ENCODE measurements at regions of chr3 and their contacts with region 1.

Region 1: DNA sequence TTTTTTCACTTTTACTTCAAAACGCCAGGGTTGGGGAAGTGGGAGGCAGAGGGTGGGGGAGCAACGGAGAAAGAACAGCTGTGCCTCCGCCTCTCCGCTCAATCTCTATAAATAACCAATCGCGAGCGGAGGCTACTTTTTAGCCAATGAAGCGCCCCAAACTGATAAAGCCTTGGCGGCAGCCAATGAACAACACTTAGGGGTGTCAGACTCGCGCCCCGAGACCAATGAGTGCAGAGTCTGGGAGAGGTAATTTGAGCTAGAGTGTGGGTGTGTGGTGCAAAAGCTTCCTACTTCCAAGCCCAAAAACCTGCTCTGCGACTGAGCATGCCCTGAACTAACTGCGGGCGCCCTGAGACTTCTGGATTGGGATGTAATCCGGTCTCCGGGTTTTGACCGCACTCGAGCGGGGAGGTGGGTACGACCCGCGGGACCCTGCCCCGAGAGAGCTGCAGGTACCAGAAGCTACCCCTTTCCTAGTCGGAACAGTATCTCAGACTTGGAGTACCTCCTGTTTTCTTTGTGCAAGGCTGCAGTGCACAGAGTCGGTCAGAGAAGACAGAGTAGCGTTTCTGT is 800 bp upstream of the RAP2B start:
- DNase-seq: peak; percentile 81 to 96
- ATAC-seq: peak; percentile 72 to 89 (median 78)
- H3K4me3 ChIP-seq: peak overlapping the region; percentile 91
- H3K4me3 Mint-ChIP-seq: peak overlapping the region; percentile 98
- H3K27ac ChIP-seq: peak overlapping the region; percentile 87
- H3K27ac Mint-ChIP-seq: peak overlapping the region; percentile 90 to 92
- H3K4me1 ChIP-seq: peaks cover 11% of the 10 kb centered on the region
- H3K4me1 Mint-ChIP-seq: peaks cover 50 to 54% of the 10 kb centered on the region in 2 donors
- H3K27me3 ChIP-seq: no peaks in the 10 kb centered on the region
- H3K27me3 Mint-ChIP-seq: no peaks in the 10 kb centered on the region
- CTCF ChIP-seq: no peak

Region 2: DNA sequence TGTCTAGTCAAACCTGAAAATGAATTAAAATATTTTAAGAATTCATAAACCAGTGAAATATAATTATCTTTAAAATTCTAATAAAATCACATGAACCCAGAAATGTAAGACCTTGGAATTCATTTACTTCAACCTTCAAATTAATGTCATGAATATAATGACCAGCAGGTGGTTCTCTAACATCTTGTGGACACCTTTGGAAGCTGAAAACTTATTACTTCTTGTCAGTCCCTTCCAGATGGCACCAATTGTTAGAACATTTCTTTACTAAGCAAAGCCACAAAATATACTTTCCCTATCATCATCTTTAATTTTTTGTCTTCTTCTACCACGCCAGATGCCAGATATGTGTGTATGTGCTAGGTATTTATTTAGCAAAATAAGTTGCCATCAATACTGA is 652.5 kb before region 1 on chr3:
- intact Hi-C with region 1: no loop called
- DNase-seq: no peak
- ATAC-seq: no peak
- H3K4me3 ChIP-seq: no peak overlapping the region
- H3K4me3 Mint-ChIP-seq: no peak overlapping the region
- H3K27ac ChIP-seq: no peak overlapping the region
- H3K27ac Mint-ChIP-seq: no peak overlapping the region
- H3K4me1 ChIP-seq: no peaks in the 10 kb centered on the region
- H3K4me1 Mint-ChIP-seq: no peaks in the 10 kb centered on the region
- H3K27me3 ChIP-seq: no peaks in the 10 kb centered on the region
- H3K27me3 Mint-ChIP-seq: peaks cover 0 to 9% of the 10 kb centered on the region in 2 donors
- CTCF ChIP-seq: no peak

Region 3: GRCh38 chr3:153043729-153044328 is 117.4 kb before region 1 on chr3:
- intact Hi-C with region 1: loop called (anchors 5 kb)
- DNase-seq: no peak
- ATAC-seq: no peak
- H3K4me3 ChIP-seq: no peak overlapping the region
- H3K4me3 Mint-ChIP-seq: no peak overlapping the region
- H3K27ac ChIP-seq: no peak overlapping the region
- H3K27ac Mint-ChIP-seq: no peak overlapping the region
- H3K4me1 ChIP-seq: peaks cover 2% of the 10 kb centered on the region
- H3K4me1 Mint-ChIP-seq: no peaks in the 10 kb centered on the region
- H3K27me3 ChIP-seq: no peaks in the 10 kb centered on the region
- H3K27me3 Mint-ChIP-seq: peaks cover 3 to 16% of the 10 kb centered on the region in 2 donors
- CTCF ChIP-seq: no peak

Region 4: DNA sequence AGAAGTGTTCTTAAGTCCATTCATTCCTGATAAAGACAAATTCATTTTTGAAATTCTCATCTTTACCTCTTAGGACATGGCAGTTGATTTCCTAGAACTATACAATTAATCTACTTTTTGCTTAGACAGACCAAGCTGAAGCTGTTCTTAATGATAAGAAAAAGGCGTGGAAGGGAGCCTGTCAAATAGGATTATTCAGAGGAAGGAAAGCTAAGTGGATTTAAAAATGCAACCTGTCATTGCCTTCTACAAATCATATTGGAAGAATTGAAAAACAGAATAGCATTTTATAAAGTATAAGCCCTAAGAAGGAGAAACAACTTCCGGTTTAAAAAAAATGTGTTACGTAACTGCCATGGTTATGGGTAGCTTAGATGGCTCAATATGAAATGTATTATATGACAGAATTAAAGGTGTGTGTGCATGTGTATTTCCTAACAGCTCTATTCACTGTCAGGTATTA is 80.4 kb before region 1 on chr3:
- intact Hi-C with region 1: no loop called
- DNase-seq: no peak
- ATAC-seq: no peak
- H3K4me3 ChIP-seq: no peak overlapping the region
- H3K4me3 Mint-ChIP-seq: no peak overlapping the region
- H3K27ac ChIP-seq: no peak overlapping the region
- H3K27ac Mint-ChIP-seq: no peak overlapping the region
- H3K4me1 ChIP-seq: no peaks in the 10 kb centered on the region
- H3K4me1 Mint-ChIP-seq: peaks cover 6 to 8% of the 10 kb centered on the region in 2 donors
- H3K27me3 ChIP-seq: no peaks in the 10 kb centered on the region
- H3K27me3 Mint-ChIP-seq: no peaks in the 10 kb centered on the region
- CTCF ChIP-seq: no peak

Region 5: DNA sequence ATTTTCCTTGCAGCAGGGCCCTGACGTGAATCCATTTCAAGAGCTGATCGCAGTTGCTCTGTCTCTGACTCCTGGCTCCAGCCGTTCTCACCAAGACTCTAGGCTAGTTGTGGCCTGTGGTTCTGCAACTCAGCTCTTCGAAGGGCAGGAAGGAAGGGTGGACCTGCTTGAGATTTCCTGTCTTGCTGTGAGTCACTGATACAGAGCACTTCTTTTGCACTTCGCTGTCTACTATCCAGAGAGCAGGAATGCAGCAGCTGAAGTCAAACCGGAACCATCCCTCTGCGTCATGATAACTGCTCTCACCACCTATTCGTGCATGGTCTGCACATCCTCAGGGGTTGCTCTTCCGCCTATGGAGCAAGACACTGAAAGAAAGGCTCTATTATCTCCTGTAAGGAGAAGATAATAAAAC is 60.5 kb after region 1 on chr3:
- intact Hi-C with region 1: loop called (anchors 1 kb)
- DNase-seq: peak; percentile 72 to 93
- ATAC-seq: peak; percentile 90 to 98 (median 98)
- H3K4me3 ChIP-seq: peak overlapping the region; percentile 2
- H3K4me3 Mint-ChIP-seq: peak overlapping the region; percentile 86
- H3K27ac ChIP-seq: peak overlapping the region; percentile 99
- H3K27ac Mint-ChIP-seq: peak overlapping the region; percentile 94 to 99
- H3K4me1 ChIP-seq: peaks cover 45% of the 10 kb centered on the region
- H3K4me1 Mint-ChIP-seq: peaks cover 49 to 60% of the 10 kb centered on the region in 2 donors
- H3K27me3 ChIP-seq: no peaks in the 10 kb centered on the region
- H3K27me3 Mint-ChIP-seq: no peaks in the 10 kb centered on the region
- CTCF ChIP-seq: no peak

Region 6: DNA sequence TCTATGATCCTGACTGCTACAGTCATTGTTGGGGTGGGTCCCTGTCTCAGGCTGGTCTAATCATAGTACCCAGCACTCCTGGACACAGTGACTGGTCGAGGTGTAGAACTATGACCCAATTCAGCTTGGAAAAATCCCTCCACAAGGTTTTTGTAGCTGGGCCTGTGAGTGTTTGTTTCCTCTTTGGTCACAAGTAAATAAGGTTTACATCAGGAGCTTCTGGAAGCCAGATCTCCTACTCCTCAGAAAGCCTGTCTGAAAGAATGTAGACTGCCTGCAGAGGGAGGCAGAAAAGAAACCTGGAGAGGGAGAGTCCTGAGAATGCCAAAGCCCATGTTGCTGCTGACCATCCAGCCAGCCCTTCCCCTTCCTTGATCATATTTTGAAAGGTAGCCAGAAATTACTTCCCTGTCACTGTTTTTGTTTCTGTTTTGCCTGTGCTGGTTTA is 124.0 kb after region 1 on chr3:
- intact Hi-C with region 1: loop called (anchors 5 kb)
- DNase-seq: peak in 1 of 2 donors; percentile 6
- ATAC-seq: no peak
- H3K4me3 ChIP-seq: no peak overlapping the region
- H3K4me3 Mint-ChIP-seq: no peak overlapping the region
- H3K27ac ChIP-seq: peak overlapping the region; percentile 0
- H3K27ac Mint-ChIP-seq: peak overlapping the region; percentile 72 to 74
- H3K4me1 ChIP-seq: peaks cover 15% of the 10 kb centered on the region
- H3K4me1 Mint-ChIP-seq: peaks cover 41 to 46% of the 10 kb centered on the region in 2 donors
- H3K27me3 ChIP-seq: no peaks in the 10 kb centered on the region
- H3K27me3 Mint-ChIP-seq: no peaks in the 10 kb centered on the region
- CTCF ChIP-seq: no peak

Region 7: DNA sequence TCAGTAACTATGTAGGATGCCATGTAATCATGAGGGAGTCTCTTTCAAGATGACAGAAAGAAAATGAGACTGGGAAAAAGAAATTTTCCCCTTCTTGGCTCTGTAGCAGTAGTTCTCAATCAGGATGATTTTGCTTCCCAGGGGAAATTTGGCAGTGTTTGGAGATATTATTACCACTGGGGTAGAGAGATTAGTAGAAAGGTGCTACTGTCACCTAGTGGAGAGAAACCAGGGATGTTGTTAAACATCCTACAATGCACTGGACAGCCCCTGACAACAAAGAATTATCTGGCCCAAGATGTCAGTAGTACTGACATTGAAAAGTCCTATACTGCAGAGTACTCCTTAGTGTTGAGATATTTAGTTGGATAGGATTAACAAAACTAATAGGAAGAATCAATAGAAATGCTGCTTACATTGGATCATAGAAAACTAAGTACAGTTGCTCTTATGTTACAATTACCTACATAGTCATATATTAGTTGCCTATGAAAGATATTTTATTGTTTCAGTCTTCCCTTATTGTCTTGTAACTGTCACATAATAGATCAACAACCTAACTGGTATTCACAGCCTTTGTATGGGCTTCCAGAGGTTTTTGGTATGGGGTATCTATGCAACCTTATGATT is 434.1 kb after region 1 on chr3:
- intact Hi-C with region 1: loop called (anchors 2 kb)
- DNase-seq: peak in 1 of 2 donors; percentile 51
- ATAC-seq: peak in 2 of 3 donors; percentile 70 to 72
- H3K4me3 ChIP-seq: no peak overlapping the region
- H3K4me3 Mint-ChIP-seq: no peak overlapping the region
- H3K27ac ChIP-seq: no peak overlapping the region
- H3K27ac Mint-ChIP-seq: no peak overlapping the region
- H3K4me1 ChIP-seq: no peaks in the 10 kb centered on the region
- H3K4me1 Mint-ChIP-seq: no peaks in the 10 kb centered on the region
- H3K27me3 ChIP-seq: no peaks in the 10 kb centered on the region
- H3K27me3 Mint-ChIP-seq: no peaks in the 10 kb centered on the region
- CTCF ChIP-seq: peak; percentile 73

Region 8: DNA sequence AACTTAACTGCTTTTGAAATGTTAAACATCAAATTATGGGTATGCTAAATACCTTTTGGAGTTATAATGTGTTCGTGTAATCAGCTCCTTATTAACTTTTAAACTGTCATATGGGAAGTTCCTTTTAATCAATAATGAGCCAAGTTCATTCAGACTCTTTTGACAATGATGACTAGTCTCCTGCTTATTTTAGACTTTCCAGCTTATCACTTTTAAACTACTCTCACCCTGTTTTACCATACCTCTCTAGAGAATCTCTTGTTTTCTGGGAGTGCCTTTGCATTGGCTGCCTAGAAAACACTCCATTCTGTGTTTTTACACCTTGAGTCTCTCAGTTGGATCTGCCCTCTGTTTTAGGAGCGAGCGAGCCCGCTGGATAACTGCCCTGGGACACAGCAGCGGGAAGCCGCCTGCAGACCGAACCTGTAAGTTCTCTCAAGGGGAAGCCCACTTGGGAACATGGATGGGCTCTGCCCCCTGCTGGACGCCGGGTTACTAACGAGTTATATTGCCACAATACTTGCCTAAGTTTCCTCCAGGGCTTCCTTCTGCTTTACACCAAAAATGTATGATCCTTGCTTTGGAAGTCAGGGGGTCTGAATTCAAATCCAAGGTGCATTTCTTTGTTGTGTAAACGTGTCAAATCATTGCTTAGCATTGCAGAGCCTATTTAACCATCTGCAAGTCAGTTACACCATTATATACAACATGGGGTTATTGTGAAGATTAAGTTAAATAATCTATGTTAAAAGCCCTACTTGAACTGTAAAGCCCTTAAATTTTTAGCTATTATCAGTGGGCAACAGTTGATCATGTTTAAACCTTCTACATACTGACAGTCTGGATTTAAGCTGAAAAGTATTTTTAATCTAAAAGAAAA is 1091.8 kb after region 1 on chr3:
- intact Hi-C with region 1: loop called (anchors 2 kb)
- DNase-seq: peak; percentile 56 to 69
- ATAC-seq: peak; percentile 72 to 82 (median 79)
- H3K4me3 ChIP-seq: no peak overlapping the region
- H3K4me3 Mint-ChIP-seq: no peak overlapping the region
- H3K27ac ChIP-seq: no peak overlapping the region
- H3K27ac Mint-ChIP-seq: peak overlapping the region in 1 of 2 donors; percentile 78
- H3K4me1 ChIP-seq: no peaks in the 10 kb centered on the region
- H3K4me1 Mint-ChIP-seq: peaks cover 9 to 10% of the 10 kb centered on the region in 2 donors
- H3K27me3 ChIP-seq: no peaks in the 10 kb centered on the region
- H3K27me3 Mint-ChIP-seq: no peaks in the 10 kb centered on the region
- CTCF ChIP-seq: peak; percentile 73

Measured in natural killer cell (primary cell).